ENCODE measurements at regions of chr9 and their contacts with region 1.

Region 1: GRCh38 chr9:78213712-78214111 is 22.2 kb upstream of the CEP78 start:
- H3K4me3 Mint-ChIP-seq: no peak overlapping the region
- H3K27ac Mint-ChIP-seq: no peak overlapping the region
- H3K4me1 Mint-ChIP-seq: peaks cover 6% of the 10 kb centered on the region
- H3K27me3 Mint-ChIP-seq: no peaks in the 10 kb centered on the region

Region 2: GRCh38 chr9:77876091-77876490 is 337.6 kb before region 1 on chr9:
- intact Hi-C with region 1: loop called (anchors 10 kb)
- H3K4me3 Mint-ChIP-seq: no peak overlapping the region
- H3K27ac Mint-ChIP-seq: no peak overlapping the region
- H3K4me1 Mint-ChIP-seq: peaks cover 33% of the 10 kb centered on the region
- H3K27me3 Mint-ChIP-seq: no peaks in the 10 kb centered on the region

Region 3: GRCh38 chr9:77977210-77977611 is 236.5 kb before region 1 on chr9:
- intact Hi-C with region 1: loop called (anchors 2 kb)
- H3K4me3 Mint-ChIP-seq: no peak overlapping the region
- H3K27ac Mint-ChIP-seq: peak overlapping the region; percentile 80
- H3K4me1 Mint-ChIP-seq: peaks cover 65% of the 10 kb centered on the region
- H3K27me3 Mint-ChIP-seq: no peaks in the 10 kb centered on the region

Region 4: GRCh38 chr9:78053627-78054026 is 160.1 kb before region 1 on chr9:
- intact Hi-C with region 1: no loop called
- H3K4me3 Mint-ChIP-seq: no peak overlapping the region
- H3K27ac Mint-ChIP-seq: no peak overlapping the region
- H3K4me1 Mint-ChIP-seq: peaks cover 26% of the 10 kb centered on the region
- H3K27me3 Mint-ChIP-seq: peaks cover 16% of the 10 kb centered on the region